ENCODE measurements at regions of chr12 and their contacts with region 1.

Region 1: DNA sequence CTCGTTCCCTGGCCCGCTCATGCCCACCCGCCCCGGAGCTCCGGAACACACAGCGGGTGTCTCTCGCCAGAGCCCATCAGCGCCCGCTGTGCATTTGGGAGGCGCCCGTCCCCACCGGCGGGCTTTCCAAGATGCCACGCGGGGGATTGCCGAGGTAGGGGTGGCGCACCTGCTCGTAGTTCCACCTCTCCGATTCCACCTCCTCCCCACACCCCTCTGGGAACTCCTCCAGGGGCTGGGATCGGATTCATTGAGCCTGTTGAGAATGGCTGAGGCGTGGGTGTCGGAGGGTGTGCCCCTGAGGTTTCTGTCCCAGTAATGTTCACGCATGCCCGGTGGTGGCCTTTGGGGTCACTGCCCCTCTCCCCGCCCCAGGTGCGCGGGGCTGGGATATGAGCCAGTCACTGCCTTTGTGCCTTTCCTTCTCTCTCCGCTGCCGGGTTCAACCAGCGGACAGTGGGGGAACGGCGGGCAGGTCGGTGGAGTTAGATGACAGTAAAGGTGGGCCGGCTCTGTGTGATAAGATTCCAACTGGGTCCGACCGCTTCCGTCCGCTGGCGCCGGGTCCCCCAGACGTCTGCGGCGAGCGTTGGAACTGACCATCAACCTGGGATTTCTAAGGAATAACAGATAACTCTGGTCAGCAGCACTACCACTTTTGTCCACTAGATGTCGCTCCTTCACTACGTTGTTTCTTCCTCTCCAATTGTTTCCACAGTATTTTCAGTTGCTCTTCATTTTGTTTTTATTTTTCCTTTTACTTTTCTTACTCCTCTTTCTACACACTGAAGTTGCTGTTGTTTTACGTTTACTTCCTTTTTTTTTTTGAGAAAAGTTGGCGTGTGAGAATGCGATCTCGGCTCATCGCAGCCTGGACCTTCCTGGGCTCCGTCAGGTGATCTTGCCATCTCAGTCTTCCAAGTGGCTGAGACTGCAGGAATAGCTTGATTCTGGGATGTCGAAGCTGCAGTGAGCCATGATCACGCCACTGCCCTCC is 178.1 kb upstream of the ALG10B start:
- DNase-seq: no peak
- ATAC-seq: peak; percentile 68 to 91 (median 73)
- H3K4me3 ChIP-seq: peak overlapping the region; percentile 65
- H3K27ac ChIP-seq: no peak overlapping the region
- H3K4me1 ChIP-seq: peaks cover 6% of the 10 kb centered on the region
- H3K27me3 ChIP-seq: peaks cover 0 to 10% (median 2%) of the 10 kb centered on the region in 3 donors
- CTCF ChIP-seq: peak; percentile 98

Region 2: DNA sequence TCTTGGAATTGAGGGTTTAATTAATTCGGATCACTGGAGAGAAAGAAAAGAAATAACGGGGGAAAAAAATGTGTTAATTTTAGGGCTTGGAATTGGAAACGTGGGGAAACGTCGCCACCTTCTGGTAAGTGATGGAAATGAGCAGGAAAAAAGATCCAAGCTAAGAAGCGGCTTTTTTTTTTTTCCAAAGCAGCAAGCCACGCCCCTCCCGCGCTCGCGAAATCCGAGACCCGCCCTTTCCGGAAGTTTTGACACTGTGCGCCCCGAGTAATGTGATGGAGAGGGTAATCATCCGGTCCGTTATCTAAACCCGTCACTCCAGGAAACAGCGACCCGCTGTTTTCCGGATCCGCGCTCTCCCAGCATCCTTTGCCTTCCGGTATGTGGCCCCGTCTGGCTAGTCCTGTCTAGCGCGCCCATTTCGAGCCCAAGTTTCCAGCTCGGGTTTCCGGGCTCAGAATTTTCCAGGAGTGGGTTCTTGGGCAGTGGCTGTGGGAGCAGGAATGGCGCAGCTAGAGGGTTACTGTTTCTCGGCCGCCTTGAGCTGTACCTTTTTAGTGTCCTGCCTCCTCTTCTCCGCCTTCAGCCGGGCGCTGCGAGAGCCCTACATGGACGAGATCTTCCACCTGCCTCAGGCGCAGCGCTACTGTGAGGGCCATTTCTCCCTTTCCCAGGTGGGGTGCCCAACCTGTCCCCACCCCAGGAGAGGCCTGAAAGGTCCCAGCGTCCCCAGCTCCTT is 178.0 kb after region 1 on chr12 and contains the start of gene ALG10B:
- intact Hi-C with region 1: loop called (anchors 2 to 5 kb)
- DNase-seq: peak; percentile 91 to 95
- ATAC-seq: peak; percentile 99 to 100 (median 100)
- H3K4me3 ChIP-seq: peak within 1 kb of the TSS; percentile 72
- H3K27ac ChIP-seq: peak within 1 kb of the TSS; percentile 73
- H3K4me1 ChIP-seq: no peaks in the 10 kb centered on the region
- H3K27me3 ChIP-seq: no peaks in the 10 kb centered on the region
- CTCF ChIP-seq: peak; percentile 80
- total RNA-seq, gene ALG10B: 2.7 to 5.1 (median 4.1) TPM

Measured in psoas muscle (tissue), 8 donors.